ENCODE measurements at regions of chr12 and their contacts with region 1.

Region 1: DNA sequence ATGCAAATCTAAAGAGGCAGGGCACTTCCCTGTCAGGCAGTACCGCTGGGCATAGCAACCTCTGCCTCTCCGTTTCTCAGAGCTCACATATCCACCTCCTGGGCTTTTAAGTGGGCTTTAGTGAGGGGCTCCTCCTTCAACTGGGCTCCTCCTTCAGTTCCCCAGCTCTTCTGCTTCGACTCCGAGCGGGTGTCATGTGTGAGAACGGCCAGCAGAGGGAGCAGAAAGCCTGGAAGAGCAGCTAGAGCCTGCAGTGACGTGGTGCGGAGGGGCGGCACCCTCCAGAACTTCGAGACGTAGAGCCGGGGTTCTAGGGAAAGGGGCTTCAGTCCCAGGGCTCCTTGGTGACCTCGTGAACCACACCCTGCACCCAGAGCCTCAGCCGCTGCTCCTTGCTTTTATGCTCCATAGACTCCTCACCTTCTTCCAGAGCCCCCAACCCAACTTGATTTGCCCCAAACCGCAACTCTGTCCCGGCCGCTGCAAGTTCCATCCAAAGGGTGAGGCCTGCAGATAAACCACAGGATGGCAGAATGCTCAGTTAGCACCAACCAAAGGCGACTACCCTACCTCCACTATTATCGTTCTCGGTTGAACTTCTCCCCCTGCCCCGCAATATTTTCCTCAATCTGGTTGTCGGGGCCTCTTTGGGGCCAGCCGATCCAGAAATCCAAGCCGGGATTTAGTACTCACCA is 383 bp upstream of the GLI1 start:
- DNase-seq: peak; percentile 87 to 95 (median 93)
- H3K4me3 ChIP-seq: peak overlapping the region; percentile 64
- H3K27ac ChIP-seq: peak overlapping the region; percentile 23 to 47
- H3K4me1 ChIP-seq: peaks cover 7% of the 10 kb centered on the region
- H3K27me3 ChIP-seq: no peaks in the 10 kb centered on the region
- CTCF ChIP-seq: peak; percentile 87 to 95 (median 91)
- EP300 ChIP-seq: no peak
- POLR2A ChIP-seq: peak; percentile 58

Region 2: DNA sequence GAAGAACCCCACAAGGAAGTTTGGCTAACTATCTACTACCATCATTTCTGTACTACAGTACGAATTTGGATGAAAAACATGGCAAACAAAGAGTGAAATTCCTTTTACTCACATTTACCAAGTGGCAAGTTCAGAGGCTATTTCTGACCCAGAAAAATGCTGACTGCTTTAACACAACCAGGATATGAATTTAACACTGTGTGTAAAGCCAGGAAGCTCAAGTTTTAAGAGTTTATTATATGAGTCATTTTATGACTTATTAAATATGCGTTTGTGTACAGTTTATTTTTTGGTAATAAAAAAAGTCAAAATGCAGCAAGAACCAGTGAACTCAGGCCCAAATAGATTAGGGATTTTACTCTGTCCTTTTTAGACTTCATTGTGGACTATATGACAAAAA is 149.8 kb before region 1 on chr12:
- intact Hi-C with region 1: loop called in 3 of 4 experiments (anchors 5 to 10 kb)
- DNase-seq: no peak
- H3K4me3 ChIP-seq: no peak overlapping the region
- H3K27ac ChIP-seq: no peak overlapping the region
- H3K4me1 ChIP-seq: no peaks in the 10 kb centered on the region
- H3K27me3 ChIP-seq: no peaks in the 10 kb centered on the region
- CTCF ChIP-seq: no peak
- EP300 ChIP-seq: no peak
- POLR2A ChIP-seq: no peak

Region 3: DNA sequence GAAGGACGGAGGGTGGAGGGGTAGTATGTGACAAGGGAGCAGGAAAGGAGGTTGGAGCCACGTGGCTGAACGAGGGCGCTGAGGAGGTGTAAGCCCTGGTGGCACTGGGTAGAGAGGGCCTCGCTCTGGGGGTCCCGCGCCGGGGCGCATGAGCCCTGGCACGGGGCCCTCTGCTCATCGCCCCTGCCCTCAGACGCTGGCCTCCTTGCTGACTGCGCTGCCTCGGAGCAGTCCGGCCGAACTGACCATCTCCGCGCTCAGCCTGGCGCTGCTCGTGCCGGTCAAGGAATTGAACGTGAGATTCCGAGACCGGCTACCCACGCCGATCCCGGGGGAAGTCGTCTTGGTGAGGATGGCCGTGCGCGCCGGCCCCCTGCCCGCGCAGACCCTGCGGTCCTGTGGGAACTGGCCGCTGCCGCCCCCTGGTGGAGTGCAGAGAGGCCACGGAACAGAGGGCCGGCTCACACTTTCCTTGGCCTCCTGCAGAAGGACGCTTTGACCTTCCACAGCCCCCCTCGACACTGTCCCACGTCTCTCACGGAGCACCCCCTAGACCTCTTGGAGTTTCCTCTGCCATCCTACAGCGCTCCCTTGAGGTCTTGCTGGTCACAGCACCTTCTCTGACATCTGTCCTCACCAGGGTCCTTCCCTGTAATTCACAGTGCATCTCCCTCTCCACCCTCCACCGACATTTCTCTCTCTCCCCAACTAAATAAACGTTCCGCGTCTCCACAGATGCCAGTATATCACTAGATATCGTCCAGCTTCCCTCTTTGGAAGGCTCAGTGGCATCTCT is 162.5 kb after region 1 on chr12:
- intact Hi-C with region 1: loop called in 2 of 4 experiments (anchors 5 to 10 kb)
- DNase-seq: peak; percentile 55 to 83 (median 75)
- H3K4me3 ChIP-seq: peak overlapping the region; percentile 27
- H3K27ac ChIP-seq: no peak overlapping the region
- H3K4me1 ChIP-seq: peaks cover 4% of the 10 kb centered on the region
- H3K27me3 ChIP-seq: no peaks in the 10 kb centered on the region
- CTCF ChIP-seq: peak; percentile 88 to 97 (median 92)
- EP300 ChIP-seq: no peak
- POLR2A ChIP-seq: no peak

Region 4: GRCh38 chr12:57627501-57628279 is 168.5 kb after region 1 on chr12:
- intact Hi-C with region 1: loop called in 2 of 4 experiments (anchors 5 to 10 kb)
- DNase-seq: peak in 2 of 5 donors; percentile 20 to 23
- H3K4me3 ChIP-seq: no peak overlapping the region
- H3K27ac ChIP-seq: no peak overlapping the region
- H3K4me1 ChIP-seq: peaks cover 4% of the 10 kb centered on the region
- H3K27me3 ChIP-seq: no peaks in the 10 kb centered on the region
- CTCF ChIP-seq: no peak
- EP300 ChIP-seq: no peak
- POLR2A ChIP-seq: no peak

Region 5: GRCh38 chr12:57751788-57752667 is 292.8 kb after region 1 on chr12 and contains the start of gene CDK4:
- intact Hi-C with region 1: no loop called
- DNase-seq: peak; percentile 99
- H3K4me3 ChIP-seq: peak within 1 kb of the TSS; percentile 82
- H3K27ac ChIP-seq: peak within 1 kb of the TSS; percentile 31 to 50
- H3K4me1 ChIP-seq: peaks cover 9% of the 10 kb centered on the region
- H3K27me3 ChIP-seq: no peaks in the 10 kb centered on the region
- CTCF ChIP-seq: peak in 1 of 3 donors; percentile 10
- EP300 ChIP-seq: peak; percentile 30
- POLR2A ChIP-seq: peak; percentile 78
- total RNA-seq, gene CDK4: 111 to 175 (median 122) TPM